CD4-positive, alpha-beta memory T cell (primary cell): ENCODE measurements at regions of chr1 and their contacts with region 1.

Region 1: GRCh38 chr1:153990468-153991150 is at the start of gene RPS27:
- DNase-seq: peak; percentile 93 to 97 (median 95)
- H3K4me3 ChIP-seq: peak within 1 kb of the TSS; percentile 87 to 92
- H3K4me3 Mint-ChIP-seq: peak within 1 kb of the TSS; percentile 94 to 99 (median 98)
- H3K27ac ChIP-seq: peak within 1 kb of the TSS; percentile 93
- H3K27ac Mint-ChIP-seq: peak within 1 kb of the TSS; percentile 93 to 100 (median 100)
- H3K4me1 ChIP-seq: peaks cover 37% of the 10 kb centered on the region
- H3K4me1 Mint-ChIP-seq: peaks cover 22 to 42% (median 34%) of the 10 kb centered on the region in 4 donors
- H3K27me3 ChIP-seq: no peaks in the 10 kb centered on the region
- H3K27me3 Mint-ChIP-seq: peaks cover 2 to 3% of the 10 kb centered on the region in 2 donors
- total RNA-seq, gene RPS27: 6,785 to 7,292 TPM

Region 2: GRCh38 chr1:153510984-153511410 is 479.6 kb before region 1 on chr1:
- CTCF ChIA-PET with region 1: interaction called, 3 read pairs
- POLR2A ChIA-PET with region 1: interaction called, 3 read pairs
- intact Hi-C with region 1: loop called (anchors 2 kb)
- DNase-seq: peak; percentile 67 to 72 (median 69)
- H3K4me3 ChIP-seq: no peak overlapping the region
- H3K4me3 Mint-ChIP-seq: no peak overlapping the region
- H3K27ac ChIP-seq: no peak overlapping the region
- H3K27ac Mint-ChIP-seq: peak overlapping the region in 3 of 7 donors; percentile 30 to 49 (median 32)
- H3K4me1 ChIP-seq: peaks cover 8% of the 10 kb centered on the region
- H3K4me1 Mint-ChIP-seq: peaks cover 3 to 8% (median 5%) of the 10 kb centered on the region in 4 donors
- H3K27me3 ChIP-seq: no peaks in the 10 kb centered on the region
- H3K27me3 Mint-ChIP-seq: no peaks in the 10 kb centered on the region

Region 3: DNA sequence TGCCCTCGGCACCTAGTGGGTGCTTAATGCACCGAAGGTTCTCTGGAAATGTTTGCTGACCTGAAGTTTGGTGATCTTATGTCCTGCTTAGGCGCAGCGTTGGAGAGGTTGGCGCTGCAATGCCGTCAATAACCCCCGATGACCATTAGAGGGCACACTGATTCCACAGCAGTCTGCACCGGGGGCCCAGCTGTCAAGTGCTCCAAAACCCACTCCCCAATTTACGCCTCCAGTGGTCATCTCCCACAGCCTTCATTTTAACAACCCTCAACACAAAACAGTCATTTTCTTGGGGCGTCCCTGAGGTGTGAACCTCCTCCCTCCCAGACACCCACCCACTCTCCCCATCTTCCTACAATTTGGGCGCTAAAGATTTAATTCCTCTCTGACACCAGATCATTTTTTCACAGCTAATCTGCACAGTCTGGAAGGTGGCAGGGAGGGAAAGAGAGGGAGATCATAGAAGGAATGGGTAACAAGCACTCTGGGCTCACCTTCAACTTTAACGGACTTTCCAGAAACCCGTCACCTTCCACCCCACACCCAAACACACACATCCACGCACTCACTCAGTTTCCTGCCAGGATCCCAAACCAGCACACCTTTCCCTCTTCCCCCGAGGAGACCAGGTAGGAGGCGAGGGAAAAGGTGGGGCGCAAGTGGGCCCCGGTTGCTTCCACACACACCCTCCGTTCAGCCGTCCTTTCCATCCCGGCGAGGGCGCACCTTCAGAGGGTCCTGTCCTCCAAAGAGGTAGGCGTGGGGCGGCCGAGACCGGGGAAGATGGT is 312.7 kb before region 1 on chr1:
- CTCF ChIA-PET with region 1: interaction called, 5 read pairs
- POLR2A ChIA-PET with region 1: interaction called, 3 read pairs
- intact Hi-C with region 1: loop called (anchors 1 kb)
- DNase-seq: peak in 4 of 5 donors; percentile 41 to 51 (median 46)
- H3K4me3 ChIP-seq: peak overlapping the region; percentile 11 to 48
- H3K4me3 Mint-ChIP-seq: peak overlapping the region; percentile 77 to 91 (median 85)
- H3K27ac ChIP-seq: no peak overlapping the region
- H3K27ac Mint-ChIP-seq: peak overlapping the region in 3 of 7 donors; percentile 12 to 73 (median 71)
- H3K4me1 ChIP-seq: peaks cover 27% of the 10 kb centered on the region
- H3K4me1 Mint-ChIP-seq: peaks cover 15 to 21% (median 16%) of the 10 kb centered on the region in 4 donors
- H3K27me3 ChIP-seq: peaks cover 32% of the 10 kb centered on the region
- H3K27me3 Mint-ChIP-seq: peaks cover 28 to 32% of the 10 kb centered on the region in 2 donors

Region 4: DNA sequence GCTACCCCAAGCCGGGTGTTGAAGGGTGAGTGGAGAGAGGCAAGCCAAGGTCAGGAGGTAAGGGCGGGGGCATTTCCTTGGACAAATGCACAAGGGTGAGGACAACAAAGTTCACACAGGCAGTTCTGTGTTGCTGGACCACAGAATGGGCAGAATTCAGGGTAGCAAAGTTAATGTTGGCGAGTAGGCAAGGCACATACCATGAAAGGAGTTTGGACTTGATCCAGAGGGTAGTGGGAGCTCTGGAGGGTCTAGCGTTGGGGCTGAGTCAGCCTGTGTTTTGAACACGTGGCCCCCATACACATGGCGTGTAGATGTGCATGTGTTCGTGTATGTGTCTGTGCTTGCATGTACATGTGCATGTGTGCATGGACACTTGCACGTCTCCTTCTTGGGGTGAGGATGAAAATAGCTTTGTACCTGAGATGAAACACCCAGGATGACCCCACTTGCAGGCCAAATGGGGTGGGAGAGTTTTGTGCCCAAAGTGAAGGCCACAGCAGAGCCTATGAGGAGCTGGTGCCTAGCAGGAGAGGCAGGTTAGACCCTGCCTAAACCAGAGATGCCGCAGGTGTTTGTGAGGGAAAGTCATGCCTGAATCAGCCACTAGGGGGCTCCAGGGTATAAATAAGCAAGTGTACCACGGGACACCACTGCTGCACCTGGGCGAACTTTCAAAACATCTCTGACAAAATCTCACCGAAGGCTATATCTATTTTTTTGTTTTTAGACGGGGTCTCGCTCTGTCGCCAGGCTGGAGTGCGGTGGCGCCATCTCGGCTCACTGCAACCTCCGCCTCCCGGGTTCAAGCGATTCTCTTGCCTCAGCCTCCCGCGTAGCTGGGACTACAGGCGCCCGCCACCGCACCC is 193.6 kb before region 1 on chr1:
- CTCF ChIA-PET with region 1: interaction called, 169 read pairs
- POLR2A ChIA-PET with region 1: interaction called, 16 read pairs
- intact Hi-C with region 1: loop called (anchors 1 kb)
- DNase-seq: peak; percentile 76 to 85 (median 80)
- H3K4me3 ChIP-seq: no peak overlapping the region
- H3K4me3 Mint-ChIP-seq: no peak overlapping the region
- H3K27ac ChIP-seq: no peak overlapping the region
- H3K27ac Mint-ChIP-seq: peak overlapping the region; percentile 8 to 79 (median 65)
- H3K4me1 ChIP-seq: no peaks in the 10 kb centered on the region
- H3K4me1 Mint-ChIP-seq: peaks cover 0 to 16% (median 8%) of the 10 kb centered on the region in 4 donors
- H3K27me3 ChIP-seq: no peaks in the 10 kb centered on the region
- H3K27me3 Mint-ChIP-seq: no peaks in the 10 kb centered on the region

Region 5: GRCh38 chr1:153922972-153923925 is 67.4 kb before region 1 on chr1 and contains the start of gene GATAD2B:
- CTCF ChIA-PET with region 1: interaction called, 3 read pairs
- POLR2A ChIA-PET with region 1: interaction called, 60 read pairs
- intact Hi-C with region 1: loop called (anchors 2 kb)
- DNase-seq: peak; percentile 99 to 100 (median 100)
- H3K4me3 ChIP-seq: peak within 1 kb of the TSS; percentile 80 to 99
- H3K4me3 Mint-ChIP-seq: peak within 1 kb of the TSS; percentile 94 to 97 (median 95)
- H3K27ac ChIP-seq: peak within 1 kb of the TSS; percentile 97
- H3K27ac Mint-ChIP-seq: peak within 1 kb of the TSS; percentile 96 to 99 (median 97)
- H3K4me1 ChIP-seq: peaks cover 44% of the 10 kb centered on the region
- H3K4me1 Mint-ChIP-seq: peaks cover 34 to 55% (median 43%) of the 10 kb centered on the region in 4 donors
- H3K27me3 ChIP-seq: no peaks in the 10 kb centered on the region
- H3K27me3 Mint-ChIP-seq: no peaks in the 10 kb centered on the region
- total RNA-seq, gene GATAD2B: 97.0 to 104 TPM

Region 6: GRCh38 chr1:153977250-153978240 is 13.1 kb before region 1 on chr1 and contains the start of gene JTB:
- CTCF ChIA-PET with region 1: interaction called, 35 read pairs
- POLR2A ChIA-PET with region 1: interaction called, 164 read pairs
- intact Hi-C with region 1: loop called (anchors 1 kb)
- DNase-seq: peak; percentile 77 to 91 (median 79)
- H3K4me3 ChIP-seq: peak within 1 kb of the TSS; percentile 94
- H3K4me3 Mint-ChIP-seq: peak within 1 kb of the TSS; percentile 93 to 98 (median 97)
- H3K27ac ChIP-seq: peak within 1 kb of the TSS; percentile 92
- H3K27ac Mint-ChIP-seq: peak within 1 kb of the TSS; percentile 96 to 98 (median 97)
- H3K4me1 ChIP-seq: peaks cover 25% of the 10 kb centered on the region
- H3K4me1 Mint-ChIP-seq: peaks cover 15 to 54% (median 29%) of the 10 kb centered on the region in 4 donors
- H3K27me3 ChIP-seq: no peaks in the 10 kb centered on the region
- H3K27me3 Mint-ChIP-seq: no peaks in the 10 kb centered on the region
- total RNA-seq, gene JTB: 121 to 130 TPM

Region 7: DNA sequence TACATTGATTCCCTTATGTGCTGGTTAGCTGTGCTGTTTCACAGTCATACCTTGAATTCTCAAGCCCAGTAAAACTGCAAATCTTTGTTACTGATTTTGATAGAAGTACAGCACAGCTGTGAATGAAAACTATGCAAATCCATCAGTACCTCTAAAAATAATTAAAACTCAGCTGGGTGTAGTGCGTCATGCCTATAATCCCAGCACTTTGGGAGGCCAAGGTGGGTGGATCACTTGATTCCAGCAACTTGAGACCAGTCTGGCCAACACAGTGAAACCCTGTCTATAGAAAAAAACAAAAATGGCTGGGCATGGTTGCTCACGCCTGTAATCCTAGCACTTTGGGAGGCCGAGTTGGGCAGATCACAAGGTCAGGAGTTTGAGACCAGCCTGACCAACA is 103.1 kb after region 1 on chr1:
- CTCF ChIA-PET with region 1: no interaction called
- POLR2A ChIA-PET with region 1: no interaction called
- intact Hi-C with region 1: no loop called
- DNase-seq: no peak
- H3K4me3 ChIP-seq: no peak overlapping the region
- H3K4me3 Mint-ChIP-seq: no peak overlapping the region
- H3K27ac ChIP-seq: no peak overlapping the region
- H3K27ac Mint-ChIP-seq: no peak overlapping the region
- H3K4me1 ChIP-seq: no peaks in the 10 kb centered on the region
- H3K4me1 Mint-ChIP-seq: no peaks in the 10 kb centered on the region
- H3K27me3 ChIP-seq: no peaks in the 10 kb centered on the region
- H3K27me3 Mint-ChIP-seq: no peaks in the 10 kb centered on the region

Region 8: GRCh38 chr1:154272217-154272998 is 281.8 kb after region 1 on chr1 and contains the start of gene HAX1:
- CTCF ChIA-PET with region 1: interaction called, 3 read pairs
- POLR2A ChIA-PET with region 1: interaction called, 23 read pairs
- intact Hi-C with region 1: loop called (anchors 1 kb)
- DNase-seq: peak; percentile 93 to 99 (median 98)
- H3K4me3 ChIP-seq: peak within 1 kb of the TSS; percentile 66 to 85
- H3K4me3 Mint-ChIP-seq: peak within 1 kb of the TSS; percentile 89 to 98 (median 97)
- H3K27ac ChIP-seq: peak within 1 kb of the TSS; percentile 88
- H3K27ac Mint-ChIP-seq: peak within 1 kb of the TSS; percentile 97 to 99 (median 99)
- H3K4me1 ChIP-seq: peaks cover 27% of the 10 kb centered on the region
- H3K4me1 Mint-ChIP-seq: peaks cover 22 to 38% (median 29%) of the 10 kb centered on the region in 4 donors
- H3K27me3 ChIP-seq: no peaks in the 10 kb centered on the region
- H3K27me3 Mint-ChIP-seq: no peaks in the 10 kb centered on the region
- total RNA-seq, gene HAX1: 110 to 121 TPM

Region 9: DNA sequence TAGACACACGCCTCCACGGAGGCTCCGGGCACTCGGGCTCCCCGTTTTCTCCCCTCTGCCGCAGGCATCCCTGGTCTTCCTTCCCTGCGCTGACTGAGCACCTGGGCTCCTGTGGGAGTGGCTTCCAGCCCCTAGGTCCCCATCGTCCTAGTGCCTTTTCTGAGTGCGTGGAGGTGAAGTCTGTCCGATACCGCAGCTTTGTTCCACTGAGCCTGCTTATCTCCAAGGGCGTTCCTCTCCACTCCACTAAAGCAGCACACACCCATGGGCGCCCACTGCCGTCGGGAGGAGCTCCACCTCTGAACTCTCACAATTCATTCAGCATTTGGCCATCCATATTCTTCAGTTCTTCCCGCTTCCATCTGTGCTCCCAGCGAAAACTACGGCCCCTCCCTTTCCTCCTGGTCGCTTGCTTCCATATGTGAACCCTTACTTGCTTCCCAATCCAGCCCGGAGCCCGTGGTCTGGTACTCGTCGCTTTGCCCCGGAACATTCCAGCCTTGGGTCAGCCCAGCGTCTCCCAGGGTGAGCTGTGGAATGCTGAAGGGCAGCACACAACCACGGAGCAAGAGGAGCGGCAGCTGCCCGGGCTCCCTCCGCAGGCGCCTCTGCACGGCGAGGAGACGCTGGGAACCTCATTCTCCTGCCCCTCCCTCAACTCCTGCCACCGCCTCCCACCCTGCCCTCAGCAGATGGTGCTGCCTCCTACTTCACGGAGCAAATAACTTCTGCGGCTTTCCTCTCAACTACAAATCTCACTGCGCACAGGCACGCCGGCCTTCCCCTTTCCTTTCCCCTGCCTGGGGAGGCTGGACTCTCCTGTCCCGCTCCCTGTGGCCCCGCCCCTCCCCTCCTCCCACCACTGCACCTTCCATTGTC is 362.2 kb after region 1 on chr1:
- CTCF ChIA-PET with region 1: no interaction called
- POLR2A ChIA-PET with region 1: no interaction called
- intact Hi-C with region 1: no loop called
- DNase-seq: peak; percentile 44 to 68 (median 48)
- H3K4me3 ChIP-seq: peak overlapping the region; percentile 69 to 77
- H3K4me3 Mint-ChIP-seq: peak overlapping the region; percentile 84 to 95 (median 92)
- H3K27ac ChIP-seq: peak overlapping the region; percentile 51
- H3K27ac Mint-ChIP-seq: peak overlapping the region; percentile 38 to 96 (median 90)
- H3K4me1 ChIP-seq: peaks cover 54% of the 10 kb centered on the region
- H3K4me1 Mint-ChIP-seq: peaks cover 30 to 61% (median 44%) of the 10 kb centered on the region in 4 donors
- H3K27me3 ChIP-seq: no peaks in the 10 kb centered on the region
- H3K27me3 Mint-ChIP-seq: no peaks in the 10 kb centered on the region

Region 10: DNA sequence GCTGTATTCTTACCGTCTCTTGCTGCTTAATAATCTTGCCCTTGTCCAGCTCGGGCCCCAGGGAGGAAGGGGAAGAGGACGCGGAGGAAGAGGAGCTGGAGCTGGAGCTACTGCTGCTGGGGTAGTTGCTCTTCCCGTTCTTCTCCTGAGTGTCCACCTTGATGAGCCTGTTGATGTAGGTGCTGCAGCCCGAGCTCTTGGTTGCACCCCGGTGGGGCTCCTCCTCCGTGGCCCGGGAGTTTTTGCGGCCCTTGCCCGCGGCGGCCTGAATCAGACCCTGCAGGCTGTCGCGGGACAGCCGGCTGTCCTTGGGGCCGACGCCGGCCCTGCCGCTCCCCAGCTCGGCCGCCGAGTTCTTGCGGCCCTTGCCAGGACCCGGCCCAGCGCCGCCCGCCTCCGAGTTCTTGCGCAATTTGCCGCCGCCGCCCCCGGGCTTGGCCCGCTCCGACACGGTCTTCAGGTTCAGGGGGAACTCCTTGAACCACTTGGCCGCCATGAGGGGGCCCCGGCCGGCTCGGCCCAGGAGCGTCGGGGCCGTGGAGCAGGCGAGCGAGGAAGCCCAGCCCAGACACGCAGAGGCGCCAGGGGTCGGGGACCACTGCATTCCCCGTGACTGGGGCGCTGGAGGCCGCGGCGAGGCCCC is 510.9 kb after region 1 on chr1:
- CTCF ChIA-PET with region 1: no interaction called
- POLR2A ChIA-PET with region 1: no interaction called
- intact Hi-C with region 1: no loop called
- DNase-seq: no peak
- H3K4me3 ChIP-seq: no peak overlapping the region
- H3K4me3 Mint-ChIP-seq: peak overlapping the region in 6 of 8 donors; percentile 29 to 77 (median 62)
- H3K27ac ChIP-seq: no peak overlapping the region
- H3K27ac Mint-ChIP-seq: no peak overlapping the region
- H3K4me1 ChIP-seq: peaks cover 14% of the 10 kb centered on the region
- H3K4me1 Mint-ChIP-seq: peaks cover 6 to 16% (median 8%) of the 10 kb centered on the region in 4 donors
- H3K27me3 ChIP-seq: peaks cover 20% of the 10 kb centered on the region
- H3K27me3 Mint-ChIP-seq: peaks cover 35% of the 10 kb centered on the region in 2 donors